ENCODE measurements at regions of chr11 and their contacts with region 1.

Region 1: DNA sequence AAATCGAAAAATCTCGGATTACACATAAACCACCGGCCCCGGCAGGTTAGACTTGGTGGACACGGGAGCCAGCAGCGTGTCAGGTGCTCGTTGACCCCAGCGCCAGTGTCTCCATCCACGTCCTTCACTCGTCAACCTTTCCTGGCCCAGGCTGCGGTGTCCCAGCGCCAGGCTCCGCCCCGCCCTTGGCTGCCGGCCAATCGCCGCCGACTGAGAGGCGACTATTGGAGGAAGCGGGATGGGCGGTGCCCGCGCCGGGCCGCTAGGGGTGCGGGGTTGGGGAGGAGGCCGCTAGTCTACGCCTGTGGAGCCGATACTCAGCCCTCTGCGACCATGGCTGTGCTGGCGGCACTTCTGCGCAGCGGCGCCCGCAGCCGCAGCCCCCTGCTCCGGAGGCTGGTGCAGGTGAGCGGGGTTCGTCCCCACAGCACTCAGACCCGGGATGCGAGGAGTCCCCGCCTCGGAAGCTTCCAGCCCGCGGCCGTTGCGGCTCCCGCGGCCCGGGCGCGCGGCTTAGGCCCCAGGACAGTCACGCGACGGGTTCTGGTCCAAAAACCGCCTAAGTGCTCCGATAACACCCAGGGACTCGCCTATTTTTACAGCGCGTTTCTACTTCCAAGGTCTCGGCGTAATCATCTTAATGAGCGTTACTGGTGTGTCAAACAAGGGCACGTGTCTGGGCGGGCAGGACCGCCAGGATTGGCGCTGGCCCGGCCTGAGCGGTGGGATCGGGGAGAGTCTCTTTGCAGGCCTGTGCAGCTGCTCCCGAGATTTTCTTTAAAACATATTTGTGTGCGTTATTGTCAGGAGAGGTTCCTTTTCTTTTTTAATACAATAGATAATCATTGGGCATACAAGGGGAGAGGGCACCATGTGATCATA is at the start of gene ACAT1:
- DNase-seq: peak; percentile 99
- ATAC-seq: peak; percentile 95
- H3K4me3 ChIP-seq: peak within 1 kb of the TSS; percentile 27
- H3K4me1 ChIP-seq: peaks cover 21% of the 10 kb centered on the region
- CTCF ChIP-seq: peak; percentile 34
- total RNA-seq, gene ACAT1: 88.8 to 123 (median 98.0) TPM

Region 2: DNA sequence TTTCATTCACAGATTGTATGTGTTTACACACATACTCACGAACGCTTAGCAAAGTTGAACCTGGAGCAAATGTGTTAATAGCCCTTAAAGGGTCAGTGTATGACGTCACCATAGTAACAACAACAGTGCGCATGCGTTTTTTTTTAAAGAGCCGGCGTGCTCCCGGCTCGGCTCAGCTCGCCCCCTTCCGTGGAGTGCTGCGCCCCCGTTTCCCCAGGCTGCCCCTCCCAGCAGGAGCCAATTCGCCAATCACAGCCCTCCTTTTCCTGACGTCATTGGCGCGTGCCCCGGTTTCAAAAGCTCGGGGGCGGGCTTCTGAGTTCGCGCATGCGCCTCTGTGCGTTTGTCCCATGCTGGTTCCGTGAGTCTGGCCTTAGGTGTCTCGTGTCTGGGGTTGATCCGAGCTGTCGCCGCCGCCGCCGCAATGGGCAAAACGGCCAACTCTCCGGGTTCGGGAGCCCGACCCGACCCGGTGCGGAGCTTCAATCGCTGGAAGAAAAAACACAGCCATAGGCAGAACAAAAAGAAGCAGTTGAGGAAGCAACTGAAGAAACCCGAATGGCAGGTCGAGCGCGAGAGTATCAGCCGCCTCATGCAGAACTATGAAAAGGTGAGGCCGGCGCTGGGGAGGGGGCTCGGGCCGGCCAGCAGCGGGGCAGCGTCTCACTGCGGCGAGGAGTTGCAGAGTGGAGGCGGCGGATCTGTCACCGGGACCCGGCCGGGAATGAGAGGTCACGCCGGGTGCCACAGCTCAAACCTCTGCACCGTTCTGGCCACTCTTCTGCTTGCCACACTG is 543.4 kb after region 1 on chr11 and contains the start of gene DDX10:
- intact Hi-C with region 1: loop called in 1 of 2 experiments (anchors 5 kb)
- DNase-seq: peak; percentile 97 to 99 (median 99)
- ATAC-seq: peak; percentile 100
- H3K4me3 ChIP-seq: peak within 1 kb of the TSS; percentile 63
- H3K4me1 ChIP-seq: peaks cover 11% of the 10 kb centered on the region
- CTCF ChIP-seq: no peak
- total RNA-seq, gene DDX10: 16.1 to 18.3 (median 17.3) TPM

Measured in mucosa of descending colon (tissue), 3 donors.